ENCODE measurements at regions of chr17 and their contacts with region 1.

Region 1: DNA sequence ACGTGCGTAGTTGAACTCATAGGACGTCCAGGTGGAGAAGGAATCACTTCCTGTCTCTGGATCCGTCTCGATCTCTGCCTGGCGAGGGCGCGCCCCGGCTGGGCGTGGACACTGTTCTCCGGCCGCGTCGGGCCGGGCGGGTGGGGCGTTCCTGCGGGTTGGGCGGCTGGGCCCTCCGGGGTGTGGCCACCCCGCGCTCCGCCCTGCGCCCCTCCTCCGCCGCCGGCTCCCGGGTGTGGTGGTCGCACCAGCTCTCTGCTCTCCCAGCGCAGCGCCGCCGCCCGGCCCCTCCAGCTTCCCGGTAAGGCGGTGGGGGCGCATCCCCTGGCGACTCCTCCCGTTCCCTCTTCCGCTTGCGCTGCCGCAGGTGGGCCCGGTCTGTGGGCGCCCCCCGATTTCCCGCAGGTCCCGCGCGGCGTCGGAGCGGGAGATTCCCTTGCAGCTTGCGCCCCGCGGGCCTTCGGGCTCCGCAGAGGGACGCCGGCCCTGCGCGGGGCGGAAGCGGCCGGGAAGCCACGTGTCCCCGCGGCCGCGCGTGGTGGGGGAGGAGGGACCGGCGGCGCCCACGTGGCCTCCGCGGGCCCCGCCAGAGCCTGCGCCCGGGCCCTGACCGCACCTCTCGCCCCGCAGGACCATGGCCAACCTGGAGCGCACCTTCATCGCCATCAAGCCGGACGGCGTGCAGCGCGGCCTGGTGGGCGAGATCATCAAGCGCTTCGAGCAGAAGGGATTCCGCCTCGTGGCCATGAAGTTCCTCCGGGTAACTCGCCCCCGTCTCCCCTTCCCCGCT is at the start of gene NME2:
- DNase-seq: peak; percentile 95
- H3K4me3 ChIP-seq: peak within 1 kb of the TSS; percentile 83 to 99 (median 95)
- H3K27ac ChIP-seq: peak within 1 kb of the TSS; percentile 97 to 99 (median 98)
- H3K4me1 ChIP-seq: peaks cover 0 to 16% (median 14%) of the 10 kb centered on the region in 4 donors
- H3K27me3 ChIP-seq: no peaks in the 10 kb centered on the region
- CTCF ChIP-seq: peak in 1 of 4 experiments; percentile 20
- EP300 ChIP-seq: no peak
- POLR2A ChIP-seq: no peak
- total RNA-seq, gene NME2: 443 to 532 (median 524) TPM

Region 2: GRCh38 chr17:51120739-51121617 is 45.4 kb before region 1 on chr17 and contains the start of gene SPAG9:
- intact Hi-C with region 1: loop called (anchors 1 kb)
- DNase-seq: peak; percentile 98
- H3K4me3 ChIP-seq: peak within 1 kb of the TSS; percentile 91 to 99 (median 98)
- H3K27ac ChIP-seq: peak within 1 kb of the TSS; percentile 98 to 100 (median 100)
- H3K4me1 ChIP-seq: peaks cover 0 to 43% (median 29%) of the 10 kb centered on the region in 4 donors
- H3K27me3 ChIP-seq: no peaks in the 10 kb centered on the region
- CTCF ChIP-seq: no peak
- EP300 ChIP-seq: peak in 2 of 4 donors; percentile 51 to 52
- POLR2A ChIP-seq: peak; percentile 83 to 85
- total RNA-seq, gene SPAG9: 74.3 to 79.9 (median 77.0) TPM

Region 3: GRCh38 chr17:51260125-51260880 is 93.9 kb after region 1 on chr17 and contains the start of gene UTP18:
- intact Hi-C with region 1: loop called (anchors 5 kb)
- DNase-seq: peak; percentile 99
- H3K4me3 ChIP-seq: peak within 1 kb of the TSS; percentile 92 to 96 (median 94)
- H3K27ac ChIP-seq: peak within 1 kb of the TSS; percentile 91 to 100 (median 94)
- H3K4me1 ChIP-seq: peaks cover 0 to 58% (median 43%) of the 10 kb centered on the region in 4 donors
- H3K27me3 ChIP-seq: no peaks in the 10 kb centered on the region
- CTCF ChIP-seq: no peak
- EP300 ChIP-seq: peak in 2 of 4 donors; percentile 20 to 32
- POLR2A ChIP-seq: peak; percentile 42 to 52
- total RNA-seq, gene UTP18: 17.4 to 21.4 (median 19.2) TPM

Region 4: DNA sequence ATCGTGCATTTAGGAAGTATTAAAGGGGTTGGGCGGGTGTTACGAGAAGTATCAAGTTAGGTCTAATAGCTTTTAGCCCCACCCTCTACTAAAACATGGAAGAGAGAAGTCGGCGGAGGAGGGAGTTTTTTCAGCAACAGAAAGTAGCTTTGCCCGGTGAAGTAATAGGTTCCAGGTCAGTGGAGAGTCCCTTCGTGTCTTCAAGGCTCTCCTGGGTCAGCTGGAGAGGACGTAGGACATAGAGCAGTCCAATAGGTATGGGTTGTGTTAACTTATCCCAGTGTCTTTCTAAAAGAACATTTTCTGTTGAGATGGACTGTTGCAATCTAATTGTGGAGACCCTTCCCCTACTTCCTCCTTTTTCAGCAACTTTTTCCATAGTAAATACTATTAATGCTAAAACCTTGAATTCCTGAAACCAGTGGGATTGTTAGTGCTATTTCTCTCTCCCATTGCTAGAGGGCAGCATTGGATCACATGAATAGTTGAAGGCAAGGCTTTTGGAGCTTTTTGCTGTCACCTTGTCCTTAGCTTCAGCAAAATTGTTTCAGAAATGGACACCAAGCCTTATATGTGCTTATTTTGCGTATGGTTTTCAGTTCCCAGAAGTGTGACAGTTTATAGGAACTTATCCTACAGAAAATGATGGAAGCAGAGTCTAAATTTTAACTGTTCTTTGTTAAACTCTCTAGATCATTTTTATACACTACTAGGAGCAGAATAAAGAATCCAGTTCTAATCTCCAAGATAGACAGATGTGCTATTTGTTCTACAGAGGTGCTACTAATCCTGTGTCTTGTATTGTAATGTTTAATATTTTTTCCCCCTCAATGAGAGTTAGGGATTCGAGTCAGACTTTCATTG is 132.3 kb after region 1 on chr17:
- intact Hi-C with region 1: no loop called
- DNase-seq: no peak
- H3K4me3 ChIP-seq: no peak overlapping the region
- H3K27ac ChIP-seq: no peak overlapping the region
- H3K4me1 ChIP-seq: no peaks in the 10 kb centered on the region
- H3K27me3 ChIP-seq: no peaks in the 10 kb centered on the region
- CTCF ChIP-seq: peak in 3 of 4 experiments; percentile 23 to 39 (median 25)
- EP300 ChIP-seq: no peak
- POLR2A ChIP-seq: no peak

Measured in sigmoid colon (tissue), 7 donors.